Psoas muscle (tissue), 8 donors: ENCODE measurements at regions of chr3 and their contacts with region 1.

Region 1: GRCh38 chr3:146326670-146327543 is 76.0 kb upstream of the PLSCR4 start:
- DNase-seq: no peak
- ATAC-seq: peak in 2 of 4 donors; percentile 44 to 61
- H3K4me3 ChIP-seq: no peak overlapping the region
- H3K27ac ChIP-seq: no peak overlapping the region
- H3K4me1 ChIP-seq: no peaks in the 10 kb centered on the region
- H3K27me3 ChIP-seq: no peaks in the 10 kb centered on the region
- CTCF ChIP-seq: peak; percentile 49

Region 2: GRCh38 chr3:146065573-146066006 is 261.3 kb before region 1 on chr3:
- intact Hi-C with region 1: loop called (anchors 5 to 10 kb)
- DNase-seq: no peak
- ATAC-seq: no peak
- H3K4me3 ChIP-seq: no peak overlapping the region
- H3K27ac ChIP-seq: no peak overlapping the region
- H3K4me1 ChIP-seq: no peaks in the 10 kb centered on the region
- H3K27me3 ChIP-seq: no peaks in the 10 kb centered on the region
- CTCF ChIP-seq: peak; percentile 80

Region 3: GRCh38 chr3:146125951-146126350 is 201.0 kb before region 1 on chr3:
- intact Hi-C with region 1: no loop called
- DNase-seq: no peak
- ATAC-seq: peak; percentile 43 to 66 (median 61)
- H3K4me3 ChIP-seq: no peak overlapping the region
- H3K27ac ChIP-seq: peak overlapping the region; percentile 18
- H3K4me1 ChIP-seq: peaks cover 3% of the 10 kb centered on the region
- H3K27me3 ChIP-seq: no peaks in the 10 kb centered on the region
- CTCF ChIP-seq: no peak

Region 4: GRCh38 chr3:146218880-146219866 is 107.7 kb before region 1 on chr3:
- intact Hi-C with region 1: loop called (anchors 2 to 5 kb)
- DNase-seq: peak in 1 of 2 donors; percentile 15
- ATAC-seq: no peak
- H3K4me3 ChIP-seq: no peak overlapping the region
- H3K27ac ChIP-seq: no peak overlapping the region
- H3K4me1 ChIP-seq: no peaks in the 10 kb centered on the region
- H3K27me3 ChIP-seq: no peaks in the 10 kb centered on the region
- CTCF ChIP-seq: peak; percentile 70

Region 5: DNA sequence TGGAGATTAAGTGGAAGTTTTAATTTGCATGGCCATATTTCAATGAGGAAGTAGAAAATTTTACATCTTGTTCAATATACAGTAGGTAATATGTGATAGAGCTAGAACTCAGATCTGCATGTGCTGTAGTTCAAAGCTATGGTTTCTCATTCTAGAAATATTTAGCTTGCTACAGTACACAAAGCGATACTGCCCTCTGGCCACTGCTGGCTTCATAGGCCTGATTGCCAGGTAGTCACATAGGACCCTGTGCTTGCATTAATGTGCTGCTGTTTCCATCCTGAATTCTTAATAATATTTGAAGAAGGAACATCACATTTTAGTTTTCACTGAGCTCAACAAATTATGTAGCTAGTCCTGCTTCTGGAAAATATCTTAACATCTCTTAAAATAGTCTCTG is 55.5 kb after region 1 on chr3:
- intact Hi-C with region 1: no loop called
- DNase-seq: no peak
- ATAC-seq: no peak
- H3K4me3 ChIP-seq: no peak overlapping the region
- H3K27ac ChIP-seq: no peak overlapping the region
- H3K4me1 ChIP-seq: no peaks in the 10 kb centered on the region
- H3K27me3 ChIP-seq: no peaks in the 10 kb centered on the region
- CTCF ChIP-seq: no peak

Region 6: DNA sequence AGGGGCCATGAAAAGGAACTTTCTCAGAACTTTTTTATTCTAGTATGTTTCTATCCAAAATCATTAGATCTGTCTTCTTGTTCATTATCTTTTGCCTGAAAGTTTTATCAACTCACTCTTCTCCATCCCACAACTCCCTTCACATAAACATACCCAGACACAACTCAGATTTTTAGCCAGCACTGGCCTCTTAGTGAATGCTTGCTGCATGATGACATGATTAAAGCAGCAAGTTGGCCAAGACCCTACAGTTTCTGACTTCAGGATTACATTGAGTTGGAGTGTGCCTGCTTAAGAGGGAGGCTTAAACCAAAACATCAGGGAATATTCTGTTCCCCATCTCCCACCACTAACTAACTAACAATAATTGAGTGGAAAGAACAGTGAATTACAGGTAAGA is 104.3 kb after region 1 on chr3:
- intact Hi-C with region 1: no loop called
- DNase-seq: no peak
- ATAC-seq: no peak
- H3K4me3 ChIP-seq: no peak overlapping the region
- H3K27ac ChIP-seq: no peak overlapping the region
- H3K4me1 ChIP-seq: no peaks in the 10 kb centered on the region
- H3K27me3 ChIP-seq: no peaks in the 10 kb centered on the region
- CTCF ChIP-seq: no peak